Activated B cell treated with CpG ODN at 0.5 μM for 24 hours (primary cell): ENCODE measurements at regions of chr19 and their contacts with region 1.

Region 1: GRCh38 chr19:13155472-13156359 is 5.5 kb downstream of the IER2 start:
- DNase-seq: peak; percentile 94
- ATAC-seq: peak; percentile 46
- H3K4me3 Mint-ChIP-seq: peak overlapping the region; percentile 99
- H3K27ac Mint-ChIP-seq: peak overlapping the region; percentile 97
- H3K4me1 Mint-ChIP-seq: peaks cover 61% of the 10 kb centered on the region
- H3K27me3 Mint-ChIP-seq: no peaks in the 10 kb centered on the region
- CTCF ChIP-seq: no peak

Region 2: DNA sequence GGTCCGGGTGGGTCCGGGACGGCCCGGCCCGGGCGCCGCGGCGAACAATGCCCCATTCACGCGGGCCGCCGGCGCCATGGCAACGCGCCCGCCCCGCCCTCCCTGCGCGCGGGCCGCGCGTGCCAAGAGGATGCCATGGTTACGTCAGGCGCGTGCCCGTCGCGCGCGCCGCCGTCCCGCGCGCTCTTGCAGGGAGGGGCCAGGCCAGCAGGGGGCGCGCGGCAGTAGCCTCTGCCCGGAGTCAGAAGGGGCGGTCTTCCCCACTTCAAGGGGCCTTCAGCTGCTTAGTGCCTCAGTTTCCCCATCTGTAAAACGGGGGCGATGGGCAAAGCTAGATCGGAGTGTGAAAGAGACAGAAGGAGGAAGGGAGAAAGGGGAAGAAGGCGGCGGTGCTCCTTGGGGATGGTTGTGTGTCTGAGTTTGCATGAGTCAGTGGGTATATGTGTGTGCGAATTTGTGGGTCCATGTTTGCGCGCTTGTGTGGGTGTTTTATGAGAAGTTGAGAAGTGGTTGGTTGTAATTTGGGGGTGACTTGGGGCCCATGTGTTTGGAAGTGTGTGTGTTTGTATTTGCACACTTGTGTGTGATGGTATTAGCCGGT is 172.1 kb before region 1 on chr19:
- CTCF ChIA-PET with region 1: no interaction called
- POLR2A ChIA-PET with region 1: interaction called, 5 read pairs
- intact Hi-C with region 1: loop called (anchors 1 kb)
- DNase-seq: peak; percentile 94
- ATAC-seq: peak; percentile 78
- H3K4me3 Mint-ChIP-seq: no peak overlapping the region
- H3K27ac Mint-ChIP-seq: no peak overlapping the region
- H3K4me1 Mint-ChIP-seq: peaks cover 5% of the 10 kb centered on the region
- H3K27me3 Mint-ChIP-seq: peaks cover 3% of the 10 kb centered on the region
- CTCF ChIP-seq: peak; percentile 65

Region 3: GRCh38 chr19:13099073-13099999 is 56.4 kb before region 1 on chr19:
- CTCF ChIA-PET with region 1: interaction called, 6 read pairs
- POLR2A ChIA-PET with region 1: interaction called, 101 read pairs
- intact Hi-C with region 1: loop called (anchors 1 kb)
- DNase-seq: peak; percentile 70
- ATAC-seq: peak; percentile 2
- H3K4me3 Mint-ChIP-seq: peak overlapping the region; percentile 88
- H3K27ac Mint-ChIP-seq: peak overlapping the region; percentile 93
- H3K4me1 Mint-ChIP-seq: peaks cover 76% of the 10 kb centered on the region
- H3K27me3 Mint-ChIP-seq: no peaks in the 10 kb centered on the region
- CTCF ChIP-seq: no peak

Region 4: GRCh38 chr19:13172068-13172896 is 16.6 kb after region 1 on chr19:
- CTCF ChIA-PET with region 1: interaction called, 38 read pairs
- POLR2A ChIA-PET with region 1: interaction called, 413 read pairs
- intact Hi-C with region 1: loop called (anchors 1 kb)
- DNase-seq: no peak
- ATAC-seq: peak; percentile 16
- H3K4me3 Mint-ChIP-seq: peak overlapping the region; percentile 69
- H3K27ac Mint-ChIP-seq: peak overlapping the region; percentile 88
- H3K4me1 Mint-ChIP-seq: peaks cover 76% of the 10 kb centered on the region
- H3K27me3 Mint-ChIP-seq: no peaks in the 10 kb centered on the region
- CTCF ChIP-seq: no peak

Region 5: GRCh38 chr19:13195678-13196077 is 40.0 kb after region 1 on chr19:
- CTCF ChIA-PET with region 1: interaction called, 41 read pairs
- POLR2A ChIA-PET with region 1: interaction called, 104 read pairs
- intact Hi-C with region 1: loop called (anchors 1 kb)
- DNase-seq: peak; percentile 57
- ATAC-seq: peak; percentile 79
- H3K4me3 Mint-ChIP-seq: no peak overlapping the region
- H3K27ac Mint-ChIP-seq: peak overlapping the region; percentile 63
- H3K4me1 Mint-ChIP-seq: peaks cover 29% of the 10 kb centered on the region
- H3K27me3 Mint-ChIP-seq: no peaks in the 10 kb centered on the region
- CTCF ChIP-seq: no peak

Region 6: GRCh38 chr19:13262450-13262849 is 106.7 kb after region 1 on chr19:
- CTCF ChIA-PET with region 1: interaction called, 7 read pairs
- POLR2A ChIA-PET with region 1: interaction called, 32 read pairs
- intact Hi-C with region 1: loop called (anchors 1 kb)
- DNase-seq: no peak
- ATAC-seq: peak; percentile 36
- H3K4me3 Mint-ChIP-seq: no peak overlapping the region
- H3K27ac Mint-ChIP-seq: peak overlapping the region; percentile 35
- H3K4me1 Mint-ChIP-seq: peaks cover 28% of the 10 kb centered on the region
- H3K27me3 Mint-ChIP-seq: peaks cover under 1% of the 10 kb centered on the region
- CTCF ChIP-seq: no peak

Region 7: DNA sequence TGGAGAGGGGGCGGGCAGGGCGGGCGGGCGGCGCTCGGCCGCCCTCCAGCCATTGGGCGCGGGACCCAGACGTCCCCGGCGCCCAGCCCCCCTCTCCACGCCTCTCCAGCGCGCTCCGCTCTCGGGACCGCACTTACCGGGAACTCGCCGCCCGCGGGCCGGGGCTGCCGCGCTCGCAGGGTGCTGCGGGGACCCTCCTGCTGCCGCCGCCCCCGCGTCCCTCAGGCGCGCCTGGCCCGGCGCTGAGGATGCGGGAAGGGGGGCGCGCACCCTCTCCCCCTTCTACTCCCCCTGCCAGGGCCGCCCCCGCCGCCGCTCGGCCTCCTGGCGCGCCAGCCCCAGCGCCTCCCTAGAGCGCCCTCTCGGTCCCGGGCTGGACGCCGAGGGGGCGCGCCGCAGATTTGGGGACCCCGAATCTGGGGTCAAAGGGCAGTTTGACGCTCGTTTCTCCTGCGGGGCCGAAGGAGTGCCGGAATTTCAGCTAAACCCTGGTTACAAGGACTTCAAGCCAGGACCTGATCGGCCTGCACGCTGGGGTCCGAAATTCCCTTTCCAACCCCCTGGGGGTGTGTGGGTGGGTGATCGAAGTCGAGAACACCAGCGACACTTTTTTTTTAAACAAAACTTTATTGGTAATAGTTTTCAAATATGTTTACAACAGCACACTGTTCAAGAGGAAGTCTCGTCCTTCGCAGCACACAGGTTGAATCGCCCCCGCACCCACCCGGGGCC is 935.5 kb after region 1 on chr19:
- CTCF ChIA-PET with region 1: no interaction called
- POLR2A ChIA-PET with region 1: no interaction called
- intact Hi-C with region 1: loop called (anchors 2 kb)
- DNase-seq: peak; percentile 81
- ATAC-seq: peak; percentile 75
- H3K4me3 Mint-ChIP-seq: peak overlapping the region; percentile 99
- H3K27ac Mint-ChIP-seq: peak overlapping the region; percentile 99
- H3K4me1 Mint-ChIP-seq: peaks cover 18% of the 10 kb centered on the region
- H3K27me3 Mint-ChIP-seq: no peaks in the 10 kb centered on the region
- CTCF ChIP-seq: no peak